ENCODE measurements at regions of chr1 and their contacts with region 1.

Region 1: DNA sequence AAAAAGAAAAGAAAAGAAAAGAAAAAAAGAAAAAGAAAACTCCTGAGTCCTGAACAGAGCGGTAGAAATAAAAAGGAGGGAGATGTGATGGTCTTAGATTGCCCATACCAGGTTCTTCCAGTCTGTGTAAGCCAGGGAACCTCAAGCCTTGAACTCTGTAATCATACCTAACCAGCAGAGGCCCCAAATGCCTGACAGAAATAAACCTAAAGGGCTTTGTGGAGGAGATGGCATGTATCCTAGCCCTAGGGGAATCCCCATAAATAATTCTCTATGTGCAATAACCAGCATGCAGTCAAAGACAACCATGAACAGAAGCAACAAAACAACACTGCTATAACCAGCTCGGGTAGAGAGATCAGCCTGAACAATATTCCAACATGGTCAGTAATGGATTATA is 40.4 kb downstream of the USP48 start:
- DNase-seq: no peak
- ATAC-seq: no peak
- H3K4me3 ChIP-seq: no peak overlapping the region
- H3K4me3 Mint-ChIP-seq: no peak overlapping the region
- H3K27ac ChIP-seq: no peak overlapping the region
- H3K27ac Mint-ChIP-seq: peak overlapping the region; percentile 20
- H3K4me1 ChIP-seq: no peaks in the 10 kb centered on the region
- H3K4me1 Mint-ChIP-seq: peaks cover 11% of the 10 kb centered on the region
- H3K27me3 ChIP-seq: no peaks in the 10 kb centered on the region
- H3K27me3 Mint-ChIP-seq: no peaks in the 10 kb centered on the region
- CTCF ChIP-seq: no peak

Region 2: GRCh38 chr1:21703318-21703963 is 39.1 kb before region 1 on chr1:
- CTCF ChIA-PET with region 1: no interaction called
- POLR2A ChIA-PET with region 1: no interaction called
- intact Hi-C with region 1: loop called in 1 of 2 experiments (anchors 1 kb)
- DNase-seq: peak in 3 of 14 experiments; percentile 14 to 28 (median 22)
- ATAC-seq: no peak
- H3K4me3 ChIP-seq: no peak overlapping the region
- H3K4me3 Mint-ChIP-seq: no peak overlapping the region
- H3K27ac ChIP-seq: no peak overlapping the region
- H3K27ac Mint-ChIP-seq: no peak overlapping the region
- H3K4me1 ChIP-seq: no peaks in the 10 kb centered on the region
- H3K4me1 Mint-ChIP-seq: no peaks in the 10 kb centered on the region
- H3K27me3 ChIP-seq: no peaks in the 10 kb centered on the region
- H3K27me3 Mint-ChIP-seq: no peaks in the 10 kb centered on the region
- CTCF ChIP-seq: no peak

Region 3: DNA sequence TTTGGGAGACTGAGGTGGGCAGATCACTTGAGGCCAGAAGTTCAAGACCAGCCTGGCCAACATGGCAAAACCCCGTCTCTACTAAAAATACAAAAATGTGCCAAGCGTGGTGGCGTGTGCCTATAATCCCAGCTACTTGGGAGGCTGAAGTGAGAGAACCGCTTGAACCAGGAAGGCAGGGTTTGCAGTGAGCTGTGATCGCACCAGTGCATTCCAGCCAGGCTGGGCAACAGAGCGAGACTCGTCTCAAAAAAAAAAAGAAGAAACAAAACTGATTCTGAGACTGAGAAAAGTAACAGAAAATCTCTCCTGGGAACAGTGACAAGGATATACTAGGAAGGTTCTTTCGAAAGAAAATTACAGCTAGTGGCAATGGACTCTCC is 19.4 kb after region 1 on chr1:
- CTCF ChIA-PET with region 1: no interaction called
- POLR2A ChIA-PET with region 1: no interaction called
- intact Hi-C with region 1: no loop called
- DNase-seq: no peak
- ATAC-seq: no peak
- H3K4me3 ChIP-seq: no peak overlapping the region
- H3K4me3 Mint-ChIP-seq: no peak overlapping the region
- H3K27ac ChIP-seq: no peak overlapping the region
- H3K27ac Mint-ChIP-seq: no peak overlapping the region
- H3K4me1 ChIP-seq: peaks cover 26% of the 10 kb centered on the region
- H3K4me1 Mint-ChIP-seq: peaks cover 70% of the 10 kb centered on the region
- H3K27me3 ChIP-seq: no peaks in the 10 kb centered on the region
- H3K27me3 Mint-ChIP-seq: no peaks in the 10 kb centered on the region
- CTCF ChIP-seq: no peak